GM18951 (cell line): ENCODE measurements at regions of chr1 and their contacts with region 1.

Region 1: DNA sequence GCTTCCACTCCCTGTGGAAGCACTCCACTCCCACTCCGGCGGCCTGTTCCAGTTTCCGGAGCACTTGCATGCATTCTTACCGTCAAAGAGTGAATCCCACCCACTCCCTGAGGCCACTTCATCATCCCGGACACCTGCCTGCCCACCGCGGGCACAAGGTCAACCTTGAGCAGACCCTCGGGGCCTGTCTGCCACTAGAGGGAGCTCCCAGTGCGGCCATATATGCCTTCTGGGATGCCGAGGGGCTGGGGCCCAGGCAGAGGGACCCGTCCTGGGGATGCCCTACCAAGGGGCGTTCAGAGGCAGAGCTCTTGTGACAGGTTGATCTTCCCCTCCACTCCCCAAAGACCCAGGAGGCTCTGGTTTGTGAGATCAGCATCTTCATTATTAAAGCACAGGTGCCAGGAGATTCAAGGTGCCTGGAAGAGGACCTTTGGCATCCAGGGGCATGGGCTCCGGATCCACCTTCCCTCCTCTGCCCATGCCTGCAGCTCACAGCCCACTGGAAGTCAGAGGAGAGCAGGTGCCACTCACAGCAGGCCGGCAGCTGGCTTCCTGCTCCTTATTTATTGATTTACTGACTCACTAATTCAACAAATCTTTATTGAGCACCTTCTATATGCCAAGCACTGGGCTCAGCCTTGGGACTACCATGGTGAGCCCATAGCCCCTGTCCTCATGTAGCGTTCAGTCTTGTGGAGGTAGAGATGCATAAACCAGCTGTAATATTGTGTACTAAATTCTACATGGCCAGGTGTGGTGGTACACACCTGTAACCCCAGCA is 47.3 kb downstream of the UBIAD1 start:
- POLR2A ChIP-seq: no peak

Region 2: GRCh38 chr1:11059990-11060830 is 260.1 kb before region 1 on chr1 and contains the start of gene SRM:
- in situ Hi-C with region 1: no loop called
- POLR2A ChIP-seq: peak; percentile 81

Region 3: DNA sequence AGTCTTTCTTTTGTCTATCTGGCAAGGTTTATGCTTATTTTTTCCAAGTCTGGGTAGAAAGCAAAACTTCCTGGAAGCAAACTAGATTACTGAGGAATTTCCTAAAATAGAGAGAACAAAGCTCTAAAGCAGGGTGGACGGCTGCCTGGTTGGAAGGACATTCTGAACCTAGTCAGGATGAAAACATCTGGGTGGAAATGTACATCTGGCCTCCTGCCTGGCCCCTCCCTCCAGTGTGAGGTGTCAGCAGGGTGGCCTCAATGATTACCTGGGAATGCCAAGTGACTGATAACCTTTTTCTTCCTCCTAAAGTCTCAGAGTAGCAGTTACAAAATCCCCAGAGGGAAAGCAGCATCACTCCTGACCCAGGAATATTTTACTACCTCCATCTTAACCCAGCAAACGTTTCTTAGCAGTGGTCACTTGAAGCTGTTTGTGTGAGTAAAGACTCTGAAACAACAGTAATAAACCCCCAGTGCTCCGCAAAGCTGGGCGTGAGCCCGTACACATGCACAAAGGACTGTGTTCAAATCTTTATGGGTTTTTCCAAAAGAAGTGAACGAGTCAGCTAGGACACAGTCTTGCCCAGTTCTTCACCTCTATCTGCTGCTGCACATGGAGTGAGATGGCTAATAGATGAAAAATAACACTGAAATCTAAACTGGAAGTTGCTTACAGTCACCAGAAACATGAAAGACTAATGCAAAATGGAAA is 112.3 kb before region 1 on chr1:
- in situ Hi-C with region 1: no loop called
- POLR2A ChIP-seq: no peak

Region 4: DNA sequence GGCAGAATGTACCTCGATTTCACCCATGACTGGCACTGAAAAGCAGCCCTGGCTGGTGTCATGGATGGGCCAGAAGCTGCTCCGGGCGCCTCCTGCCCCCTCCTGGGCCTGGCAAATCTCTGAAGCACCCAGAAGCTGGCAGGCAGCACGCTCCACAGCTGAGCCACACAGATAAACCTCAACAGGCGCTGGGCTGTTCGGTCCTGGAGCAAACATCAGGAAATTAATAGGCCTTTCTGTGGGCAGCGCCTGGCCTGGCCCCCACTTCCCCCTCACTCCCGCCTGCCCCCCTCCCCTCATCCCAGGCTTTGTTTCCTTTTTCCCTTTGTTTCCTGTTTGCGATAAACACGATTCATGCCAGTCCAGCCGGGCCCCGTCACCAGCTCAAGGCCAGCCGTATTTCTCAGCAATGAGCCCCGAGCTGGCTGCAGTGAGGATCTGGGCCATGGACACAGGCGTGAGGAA is 138.5 kb after region 1 on chr1:
- in situ Hi-C with region 1: loop called (anchors 5 kb)
- POLR2A ChIP-seq: no peak

Region 5: GRCh38 chr1:11617310-11617709 is 297.0 kb after region 1 on chr1:
- in situ Hi-C with region 1: loop called (anchors 10 kb)
- POLR2A ChIP-seq: no peak